T-cell (primary cell): ENCODE measurements at regions of chr5 and their contacts with region 1.

Region 1: GRCh38 chr5:139765409-139766217 is 30.0 kb upstream of the PSD2 start:
- DNase-seq: peak; percentile 45 to 92 (median 78)
- ATAC-seq: peak; percentile 89 to 92 (median 90)
- H3K4me3 ChIP-seq: peak overlapping the region; percentile 61 to 67
- H3K4me3 Mint-ChIP-seq: peak overlapping the region; percentile 59 to 71 (median 62)
- H3K27ac ChIP-seq: no peak overlapping the region
- H3K27ac Mint-ChIP-seq: peak overlapping the region; percentile 9 to 64
- H3K4me1 ChIP-seq: peaks cover 0 to 20% of the 10 kb centered on the region in 2 experiments
- H3K4me1 Mint-ChIP-seq: peaks cover 14 to 20% (median 14%) of the 10 kb centered on the region in 3 donors
- H3K27me3 ChIP-seq: peaks cover 3 to 47% of the 10 kb centered on the region in 2 experiments
- H3K27me3 Mint-ChIP-seq: peaks cover 24 to 27% of the 10 kb centered on the region in 2 donors

Region 2: DNA sequence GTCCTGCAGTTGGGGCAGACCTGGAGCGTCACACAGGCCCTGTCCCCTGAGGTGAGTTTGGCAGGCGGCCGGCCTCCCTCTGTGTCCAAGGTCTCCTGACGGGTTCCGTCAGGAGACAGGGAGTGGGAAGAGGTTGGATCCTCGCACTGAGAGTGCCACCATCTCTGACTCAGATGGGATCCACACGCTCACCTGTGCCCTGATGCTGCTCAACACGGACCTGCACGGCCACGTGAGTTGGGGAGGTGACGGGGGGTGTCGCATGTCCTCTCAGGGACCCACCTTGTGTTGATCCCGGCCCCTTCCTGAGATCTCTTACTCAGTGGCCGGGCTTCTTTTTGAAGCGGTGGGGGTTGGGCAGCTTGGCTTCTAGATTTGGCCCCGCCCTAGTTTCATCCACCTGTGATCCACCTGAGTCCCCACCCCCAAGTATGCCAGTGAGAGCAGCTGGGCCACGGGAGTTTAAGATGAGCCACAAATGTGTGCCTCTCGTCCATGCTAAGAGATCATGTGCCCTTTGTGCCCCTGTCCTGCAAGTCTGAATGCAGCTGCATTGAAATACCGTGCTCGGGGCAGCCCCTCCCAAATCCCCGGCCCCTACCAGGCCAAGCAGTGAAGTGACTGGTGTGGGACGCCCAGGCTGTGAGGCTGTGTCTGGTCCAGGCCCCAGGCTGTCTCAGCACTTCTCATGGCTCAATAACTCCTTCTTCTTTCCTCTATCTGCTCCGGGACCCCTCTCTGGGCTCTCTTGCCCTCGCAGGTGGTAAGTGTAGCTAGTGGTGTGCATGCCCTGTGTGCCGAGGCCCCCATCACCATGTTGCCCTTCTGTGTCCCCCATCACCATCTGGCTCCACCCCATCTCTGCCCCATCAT is 57.2 kb after region 1 on chr5:
- CTCF ChIA-PET with region 1: no interaction called
- POLR2A ChIA-PET with region 1: no interaction called
- DNase-seq: no peak
- ATAC-seq: no peak
- H3K4me3 ChIP-seq: no peak overlapping the region
- H3K4me3 Mint-ChIP-seq: no peak overlapping the region
- H3K27ac ChIP-seq: no peak overlapping the region
- H3K27ac Mint-ChIP-seq: no peak overlapping the region
- H3K4me1 ChIP-seq: no peaks in the 10 kb centered on the region
- H3K4me1 Mint-ChIP-seq: no peaks in the 10 kb centered on the region
- H3K27me3 ChIP-seq: peaks cover 0 to 53% of the 10 kb centered on the region in 2 experiments
- H3K27me3 Mint-ChIP-seq: peaks cover 15 to 18% of the 10 kb centered on the region in 2 donors

Region 3: DNA sequence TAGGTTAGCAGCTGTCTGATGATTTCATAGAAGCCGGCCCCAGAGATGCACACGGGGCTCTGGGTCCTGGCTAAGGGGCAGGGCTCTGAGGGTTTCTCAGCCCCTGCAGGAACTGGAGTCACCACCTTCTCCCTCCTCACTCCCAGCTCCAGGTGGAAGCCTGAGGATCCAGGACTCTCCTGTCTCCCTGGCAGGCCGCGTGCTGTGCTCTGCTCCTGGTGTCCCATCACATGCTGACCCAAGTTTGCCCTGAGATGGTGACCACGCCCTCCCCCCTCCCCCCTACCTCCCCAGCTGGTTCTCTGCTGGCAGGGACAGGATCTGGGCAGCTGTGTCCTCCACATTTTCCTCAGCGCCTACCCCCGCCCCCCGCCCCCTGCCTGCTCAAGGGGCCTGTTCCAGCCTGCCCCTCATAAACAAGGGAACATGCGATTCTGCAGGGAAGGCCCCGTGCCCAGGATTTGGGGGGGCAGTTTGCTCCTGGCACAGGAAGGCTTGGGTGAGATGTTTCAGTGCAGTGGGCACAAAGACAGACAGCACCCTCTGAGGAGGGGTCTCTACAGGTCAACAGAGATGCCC is 117.4 kb after region 1 on chr5:
- CTCF ChIA-PET with region 1: no interaction called
- POLR2A ChIA-PET with region 1: no interaction called
- DNase-seq: no peak
- ATAC-seq: no peak
- H3K4me3 ChIP-seq: no peak overlapping the region
- H3K4me3 Mint-ChIP-seq: no peak overlapping the region
- H3K27ac ChIP-seq: no peak overlapping the region
- H3K27ac Mint-ChIP-seq: no peak overlapping the region
- H3K4me1 ChIP-seq: no peaks in the 10 kb centered on the region
- H3K4me1 Mint-ChIP-seq: no peaks in the 10 kb centered on the region
- H3K27me3 ChIP-seq: peaks cover 0 to 35% of the 10 kb centered on the region in 2 experiments
- H3K27me3 Mint-ChIP-seq: peaks cover 7 to 19% of the 10 kb centered on the region in 2 donors

Region 4: DNA sequence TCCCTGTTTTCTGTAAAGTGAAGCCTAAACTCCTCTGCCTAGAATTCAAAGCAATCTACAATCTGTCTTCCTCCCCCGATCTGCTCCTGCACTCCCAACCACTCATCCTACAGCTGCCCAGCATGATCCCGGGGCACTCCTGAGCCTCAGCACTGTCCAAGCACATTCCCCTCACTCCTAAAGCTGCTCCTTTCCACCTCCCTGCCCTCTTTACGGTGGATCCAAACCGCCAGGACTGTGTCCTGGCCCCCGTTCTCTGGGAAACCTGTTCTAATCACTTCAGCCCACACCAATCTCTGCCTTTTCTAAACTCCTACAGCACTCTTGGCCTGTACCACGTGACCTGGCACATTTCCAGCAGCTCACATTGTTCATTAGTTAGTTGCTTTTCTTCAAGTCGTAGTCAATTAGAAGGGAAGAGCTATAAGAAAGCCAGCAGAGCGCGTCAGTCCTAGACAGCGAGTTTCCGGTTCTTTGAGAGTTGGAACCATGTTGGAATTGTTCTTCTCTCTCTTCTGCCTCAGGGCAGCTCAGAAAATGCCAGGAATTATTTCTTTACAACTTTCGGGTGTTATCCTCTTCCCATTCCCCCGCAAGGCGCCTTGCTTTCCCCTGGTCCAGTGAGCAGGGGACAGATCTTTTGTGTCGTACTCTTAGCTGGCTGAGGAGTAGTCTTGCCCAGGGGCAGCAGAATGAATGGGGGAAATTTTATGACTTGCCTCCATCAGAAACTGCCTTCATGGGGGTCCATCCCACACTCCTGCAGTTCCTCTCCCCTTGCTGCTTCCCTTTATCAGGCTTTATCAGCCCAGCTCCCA is 216.8 kb after region 1 on chr5:
- CTCF ChIA-PET with region 1: interaction called in 1 of 2 experiments, 12 read pairs
- POLR2A ChIA-PET with region 1: no interaction called
- DNase-seq: peak in 1 of 35 experiments; percentile 6
- ATAC-seq: no peak
- H3K4me3 ChIP-seq: no peak overlapping the region
- H3K4me3 Mint-ChIP-seq: no peak overlapping the region
- H3K27ac ChIP-seq: no peak overlapping the region
- H3K27ac Mint-ChIP-seq: no peak overlapping the region
- H3K4me1 ChIP-seq: no peaks in the 10 kb centered on the region
- H3K4me1 Mint-ChIP-seq: no peaks in the 10 kb centered on the region
- H3K27me3 ChIP-seq: peaks cover 3 to 19% of the 10 kb centered on the region in 2 experiments
- H3K27me3 Mint-ChIP-seq: peaks cover 36 to 47% of the 10 kb centered on the region in 2 donors